Activated naive CD8-positive, alpha-beta T cell treated with anti-CD3 and anti-CD28 coated beads, Interleukin-2, amount 10 ng/mL, durations not matched to agents 7 days and 5 days (primary cell): ENCODE measurements at regions of chr10 and their contacts with region 1.

Region 1: GRCh38 chr10:113678690-113679462 is 836 bp upstream of the CASP7 start:
- DNase-seq: no peak
- ATAC-seq: peak; percentile 13
- H3K4me3 Mint-ChIP-seq: peak overlapping the region; percentile 98
- H3K27ac Mint-ChIP-seq: peak overlapping the region; percentile 97
- H3K4me1 Mint-ChIP-seq: peaks cover 37% of the 10 kb centered on the region
- H3K27me3 Mint-ChIP-seq: peaks cover 8% of the 10 kb centered on the region

Region 2: DNA sequence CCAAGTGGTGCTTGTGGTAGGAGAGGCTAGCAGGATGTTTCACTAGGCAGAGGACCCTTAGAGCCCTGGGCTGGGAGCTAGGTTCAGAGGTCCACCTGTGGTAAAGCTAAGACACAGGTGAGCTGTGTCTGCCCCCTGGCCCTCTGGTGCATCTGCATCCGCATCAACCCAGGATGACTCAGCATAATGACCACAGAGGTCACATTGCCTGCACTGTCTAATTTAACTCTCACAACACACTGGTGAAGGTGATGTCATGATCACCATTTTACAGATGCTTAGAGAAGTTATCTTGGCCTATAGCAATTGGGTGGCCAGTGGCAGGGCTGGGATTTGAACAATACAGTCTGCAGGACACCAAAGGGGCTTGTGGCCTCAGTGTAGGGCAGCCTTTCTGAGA is 92.9 kb before region 1 on chr10:
- POLR2A ChIA-PET with region 1: no interaction called
- DNase-seq: no peak
- ATAC-seq: no peak
- H3K4me3 Mint-ChIP-seq: no peak overlapping the region
- H3K27ac Mint-ChIP-seq: no peak overlapping the region
- H3K4me1 Mint-ChIP-seq: peaks cover 2% of the 10 kb centered on the region
- H3K27me3 Mint-ChIP-seq: peaks cover 5% of the 10 kb centered on the region

Region 3: GRCh38 chr10:113603057-113603768 is 75.7 kb before region 1 on chr10:
- POLR2A ChIA-PET with region 1: no interaction called
- DNase-seq: no peak
- ATAC-seq: no peak
- H3K4me3 Mint-ChIP-seq: no peak overlapping the region
- H3K27ac Mint-ChIP-seq: no peak overlapping the region
- H3K4me1 Mint-ChIP-seq: no peaks in the 10 kb centered on the region
- H3K27me3 Mint-ChIP-seq: peaks cover 3% of the 10 kb centered on the region

Region 4: DNA sequence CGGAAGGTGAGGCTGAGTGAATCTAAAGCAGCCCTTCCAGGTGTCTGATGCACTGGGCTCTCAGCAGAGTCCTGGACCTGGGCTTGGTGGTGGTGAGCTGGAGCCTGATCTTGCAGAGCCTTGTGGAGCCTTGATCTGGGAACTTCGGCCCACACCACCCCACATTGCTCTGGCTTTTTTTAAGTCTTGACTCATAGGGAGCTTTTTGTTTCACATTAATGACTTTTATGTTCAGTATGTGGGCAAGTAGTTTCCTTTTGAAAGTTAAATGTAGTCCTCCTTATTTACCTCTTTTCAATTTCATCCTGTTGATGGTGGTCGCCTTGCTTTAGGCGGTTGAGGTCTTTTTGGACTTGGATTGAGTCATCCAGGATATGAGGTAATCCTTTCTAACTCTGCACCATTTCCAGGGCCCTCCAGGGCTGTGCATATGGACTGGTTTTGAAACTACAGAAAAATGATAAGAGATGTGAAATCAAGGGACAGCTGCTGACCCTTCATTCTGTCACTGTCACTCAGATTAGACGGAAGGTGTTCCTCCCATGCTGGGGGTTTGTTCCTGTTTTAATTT is 12.1 kb before region 1 on chr10:
- POLR2A ChIA-PET with region 1: interaction called, 30 read pairs
- DNase-seq: peak; percentile 38
- ATAC-seq: peak; percentile 97
- H3K4me3 Mint-ChIP-seq: peak overlapping the region; percentile 46
- H3K27ac Mint-ChIP-seq: peak overlapping the region; percentile 91
- H3K4me1 Mint-ChIP-seq: peaks cover 14% of the 10 kb centered on the region
- H3K27me3 Mint-ChIP-seq: peaks cover 13% of the 10 kb centered on the region

Region 5: GRCh38 chr10:113689057-113689456 is 10.2 kb after region 1 on chr10:
- POLR2A ChIA-PET with region 1: interaction called, 14 read pairs
- DNase-seq: no peak
- ATAC-seq: peak; percentile 66
- H3K4me3 Mint-ChIP-seq: peak overlapping the region; percentile 76
- H3K27ac Mint-ChIP-seq: peak overlapping the region; percentile 62
- H3K4me1 Mint-ChIP-seq: peaks cover 31% of the 10 kb centered on the region
- H3K27me3 Mint-ChIP-seq: no peaks in the 10 kb centered on the region